Activated B cell treated with CpG ODN at 0.5 μM for 24 hours (primary cell): ENCODE measurements at regions of chr19 and their contacts with region 1.

Region 1: GRCh38 chr19:5790573-5791520 is at the start of gene DUS3L:
- DNase-seq: peak; percentile 89
- ATAC-seq: peak; percentile 93
- H3K4me3 Mint-ChIP-seq: peak within 1 kb of the TSS; percentile 97
- H3K27ac Mint-ChIP-seq: peak within 1 kb of the TSS; percentile 100
- H3K4me1 Mint-ChIP-seq: peaks cover 15% of the 10 kb centered on the region
- H3K27me3 Mint-ChIP-seq: peaks cover 3% of the 10 kb centered on the region
- CTCF ChIP-seq: no peak
- total RNA-seq, gene DUS3L: 82.8 and 89.1 TPM in 2 replicates

Region 2: GRCh38 chr19:5622463-5623396 is 168.1 kb before region 1 on chr19 and contains the starts of genes SAFB and SAFB2:
- CTCF ChIA-PET with region 1: no interaction called
- POLR2A ChIA-PET with region 1: interaction called, 5 read pairs
- intact Hi-C with region 1: loop called (anchors 5 kb)
- DNase-seq: peak; percentile 98
- ATAC-seq: peak; percentile 79
- H3K4me3 Mint-ChIP-seq: peak within 1 kb of the TSS; percentile 100
- H3K27ac Mint-ChIP-seq: peak within 1 kb of the TSS; percentile 99
- H3K4me1 Mint-ChIP-seq: peaks cover 77% of the 10 kb centered on the region
- H3K27me3 Mint-ChIP-seq: peaks cover 2% of the 10 kb centered on the region
- CTCF ChIP-seq: no peak
- total RNA-seq, gene SAFB: 162 and 171 TPM in 2 replicates
- total RNA-seq, gene SAFB2: 123 and 143 TPM in 2 replicates

Region 3: GRCh38 chr19:5690125-5690954 is 100.5 kb before region 1 on chr19 and contains the start of gene RPL36:
- CTCF ChIA-PET with region 1: no interaction called
- POLR2A ChIA-PET with region 1: no interaction called
- intact Hi-C with region 1: loop called (anchors 1 kb)
- DNase-seq: peak; percentile 99
- ATAC-seq: peak; percentile 48
- H3K4me3 Mint-ChIP-seq: peak within 1 kb of the TSS; percentile 93
- H3K27ac Mint-ChIP-seq: peak within 1 kb of the TSS; percentile 90
- H3K4me1 Mint-ChIP-seq: peaks cover 33% of the 10 kb centered on the region
- H3K27me3 Mint-ChIP-seq: no peaks in the 10 kb centered on the region
- CTCF ChIP-seq: peak; percentile 88
- total RNA-seq, gene RPL36: 1,170 and 1,330 TPM in 2 replicates

Region 4: DNA sequence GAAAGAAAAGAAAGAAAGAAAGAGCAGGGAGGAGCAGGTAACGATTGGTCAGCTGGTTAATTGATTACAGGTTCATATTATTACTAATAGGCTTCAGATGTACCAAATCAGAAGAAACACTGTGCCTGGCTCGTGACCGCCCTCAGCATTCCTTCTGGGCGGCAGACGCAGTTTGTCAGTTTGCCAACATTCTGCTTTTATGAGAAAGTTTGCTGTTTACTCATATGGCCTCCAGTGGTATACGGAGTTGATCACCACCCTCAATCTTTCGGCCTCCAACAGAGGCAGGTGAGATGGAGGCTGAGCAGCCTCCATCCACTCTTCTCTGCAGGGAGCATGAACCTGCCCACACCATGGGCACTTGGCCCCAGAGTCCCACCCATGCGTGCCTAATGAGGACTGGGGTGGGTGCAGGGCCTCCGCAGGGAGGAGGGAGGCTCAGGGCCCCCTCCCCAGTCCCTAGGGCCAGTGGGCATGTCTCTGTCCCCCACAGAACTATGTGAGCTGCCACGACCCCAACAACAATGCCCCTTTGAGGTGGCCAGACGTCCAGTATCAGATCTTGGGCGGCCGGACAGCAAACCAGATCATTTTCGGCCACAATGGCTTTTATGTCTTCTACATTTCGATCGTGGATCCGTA is 15.1 kb before region 1 on chr19:
- CTCF ChIA-PET with region 1: no interaction called
- POLR2A ChIA-PET with region 1: interaction called, 13 read pairs
- intact Hi-C with region 1: no loop called
- DNase-seq: no peak
- ATAC-seq: no peak
- H3K4me3 Mint-ChIP-seq: no peak overlapping the region
- H3K27ac Mint-ChIP-seq: no peak overlapping the region
- H3K4me1 Mint-ChIP-seq: no peaks in the 10 kb centered on the region
- H3K27me3 Mint-ChIP-seq: no peaks in the 10 kb centered on the region
- CTCF ChIP-seq: no peak

Region 5: DNA sequence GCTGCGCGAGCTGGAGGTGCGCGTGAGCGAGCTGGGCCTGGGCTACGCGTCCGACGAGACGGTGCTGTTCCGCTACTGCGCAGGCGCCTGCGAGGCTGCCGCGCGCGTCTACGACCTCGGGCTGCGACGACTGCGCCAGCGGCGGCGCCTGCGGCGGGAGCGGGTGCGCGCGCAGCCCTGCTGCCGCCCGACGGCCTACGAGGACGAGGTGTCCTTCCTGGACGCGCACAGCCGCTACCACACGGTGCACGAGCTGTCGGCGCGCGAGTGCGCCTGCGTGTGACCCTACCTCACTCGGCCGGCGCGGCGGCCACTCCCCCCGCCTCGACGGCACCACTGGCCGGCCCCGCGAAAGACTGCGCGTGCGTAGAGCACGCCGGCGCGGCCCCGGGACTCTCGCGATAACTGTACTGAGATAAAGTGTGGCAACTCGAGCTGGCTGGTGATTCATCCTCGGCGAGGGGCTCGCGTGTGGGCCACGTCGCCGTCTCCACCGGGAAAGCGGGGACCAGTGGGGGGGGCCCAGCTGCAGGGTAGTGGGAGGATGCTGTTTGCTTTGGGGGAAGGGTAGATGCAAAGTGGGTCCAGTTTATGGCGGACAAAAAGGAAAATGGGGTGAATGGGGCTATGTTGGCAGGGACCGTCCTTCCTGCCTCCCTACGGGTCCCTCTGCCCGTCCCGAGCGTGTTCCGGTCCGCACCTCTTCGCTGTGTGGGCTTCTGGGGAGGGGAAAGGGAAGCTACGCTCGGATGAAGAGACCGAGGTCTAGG is 37.2 kb after region 1 on chr19:
- CTCF ChIA-PET with region 1: no interaction called
- POLR2A ChIA-PET with region 1: interaction called, 15 read pairs
- intact Hi-C with region 1: loop called (anchors 1 kb)
- DNase-seq: peak; percentile 78
- ATAC-seq: peak; percentile 78
- H3K4me3 Mint-ChIP-seq: peak overlapping the region; percentile 85
- H3K27ac Mint-ChIP-seq: peak overlapping the region; percentile 75
- H3K4me1 Mint-ChIP-seq: peaks cover 18% of the 10 kb centered on the region
- H3K27me3 Mint-ChIP-seq: peaks cover 11% of the 10 kb centered on the region
- CTCF ChIP-seq: no peak

Region 6: GRCh38 chr19:5977785-5978605 is 187.1 kb after region 1 on chr19 and contains the start of gene RANBP3:
- CTCF ChIA-PET with region 1: no interaction called
- POLR2A ChIA-PET with region 1: no interaction called
- intact Hi-C with region 1: loop called (anchors 1 kb)
- DNase-seq: peak; percentile 97
- ATAC-seq: peak; percentile 91
- H3K4me3 Mint-ChIP-seq: peak within 1 kb of the TSS; percentile 91
- H3K27ac Mint-ChIP-seq: peak within 1 kb of the TSS; percentile 83
- H3K4me1 Mint-ChIP-seq: peaks cover 52% of the 10 kb centered on the region
- H3K27me3 Mint-ChIP-seq: no peaks in the 10 kb centered on the region
- CTCF ChIP-seq: no peak
- total RNA-seq, gene RANBP3: 77.0 and 98.5 TPM in 2 replicates